GM18951 (cell line): ENCODE measurements at regions of chr1 and their contacts with region 1.

Region 1: DNA sequence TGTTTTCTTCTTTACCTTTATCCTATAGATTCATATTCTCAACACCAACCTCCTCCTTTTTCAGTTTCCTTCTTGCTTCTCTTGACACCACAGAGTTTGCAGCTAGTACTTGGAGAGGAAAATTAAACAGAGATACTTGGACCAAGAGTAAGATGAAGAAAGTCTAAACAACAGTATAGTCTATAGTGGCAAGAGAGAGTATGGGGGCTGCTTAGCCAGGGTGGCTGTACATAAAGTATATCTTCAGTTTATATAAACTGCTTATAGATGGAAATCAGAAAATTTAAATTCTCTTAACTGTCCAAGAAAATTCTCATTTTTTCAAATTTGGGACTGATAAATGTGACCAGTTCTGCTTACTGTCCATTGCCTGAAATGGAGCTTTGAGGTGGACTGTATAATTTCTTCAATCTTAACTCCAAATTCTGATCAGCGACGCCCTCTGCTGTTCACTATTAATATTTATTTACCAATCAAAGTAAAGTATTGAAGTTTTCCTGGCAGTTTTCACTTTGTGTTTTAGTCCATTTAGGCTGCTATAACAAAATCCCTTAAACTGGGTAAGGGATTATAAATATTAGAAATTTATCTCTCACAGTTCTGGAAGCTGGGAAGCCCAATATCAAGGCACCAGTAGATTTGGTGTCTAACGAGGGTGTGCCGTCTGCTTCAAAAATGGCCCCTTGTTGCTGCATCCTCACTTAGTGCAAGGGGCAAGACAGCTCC is 14.8 kb upstream of the METTL18 start:
- POLR2A ChIP-seq: no peak

Region 2: GRCh38 chr1:169390303-169390702 is 419.2 kb before region 1 on chr1:
- in situ Hi-C with region 1: no loop called
- POLR2A ChIP-seq: no peak

Region 3: GRCh38 chr1:169595764-169596711 is 213.5 kb before region 1 on chr1:
- in situ Hi-C with region 1: loop called (anchors 10 kb)
- POLR2A ChIP-seq: no peak

Region 4: DNA sequence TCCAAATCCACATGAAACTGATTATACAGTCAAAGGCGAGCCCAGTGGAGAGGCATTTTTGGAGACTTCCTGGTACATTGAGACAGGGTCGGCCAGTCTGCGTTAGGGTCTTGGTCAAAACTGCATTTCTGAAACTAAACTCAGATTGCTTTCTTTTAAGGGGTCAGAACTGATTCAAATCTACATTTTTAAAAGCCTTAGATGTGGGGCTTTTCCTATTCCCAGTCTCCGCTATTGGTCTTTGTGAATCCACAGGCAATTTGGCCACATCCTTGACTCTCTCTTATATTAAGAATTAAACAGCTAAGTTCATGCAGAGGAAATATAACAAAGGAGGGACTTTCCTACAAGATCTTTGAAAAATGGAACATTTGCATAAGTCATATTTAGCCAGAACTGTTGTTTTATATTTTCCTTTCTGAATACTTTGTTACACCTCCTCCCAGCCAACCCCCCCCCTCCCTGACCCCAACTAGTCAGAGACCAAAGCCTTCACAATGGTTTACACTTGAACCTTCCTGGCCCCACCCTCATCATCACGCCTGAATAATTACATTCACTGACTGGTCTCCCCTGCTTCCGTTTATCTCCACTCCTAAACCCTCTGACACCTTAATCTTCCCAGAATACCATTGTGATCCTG is 129.0 kb before region 1 on chr1:
- in situ Hi-C with region 1: no loop called
- POLR2A ChIP-seq: no peak

Region 5: DNA sequence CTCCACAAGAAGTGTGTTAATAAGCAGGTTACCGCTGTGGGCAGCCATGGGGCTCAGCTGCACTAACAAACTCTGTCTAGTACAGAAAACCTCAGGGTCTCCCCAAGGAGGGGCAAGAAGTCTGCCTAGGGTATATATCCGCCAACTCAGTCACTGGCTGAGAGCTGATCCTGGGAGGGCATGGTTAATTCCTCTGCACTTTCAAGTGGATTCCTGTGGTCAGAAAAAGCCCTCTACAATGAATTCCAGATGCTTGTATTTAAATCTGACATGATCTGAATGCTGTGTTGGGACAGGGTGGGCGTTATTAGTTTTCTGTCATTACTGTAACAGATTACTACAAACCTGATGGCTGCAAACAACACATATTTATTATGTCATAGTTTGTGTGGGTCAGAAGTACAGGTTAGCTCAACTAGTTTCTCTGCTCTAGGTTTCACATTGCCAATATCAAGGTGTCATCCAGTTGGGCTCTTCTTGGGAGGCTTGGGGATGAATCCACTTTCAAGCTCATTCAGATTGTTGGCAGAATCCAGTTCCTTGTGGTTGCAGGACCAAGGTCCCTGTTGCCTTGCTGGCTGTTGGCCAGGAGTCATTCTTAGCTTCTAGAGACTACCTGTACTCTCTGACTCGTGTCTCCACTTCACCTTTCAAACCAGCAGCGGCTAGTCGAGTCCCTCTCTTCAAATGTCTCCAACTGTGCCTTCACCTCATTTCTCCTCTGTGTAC is 67.7 kb before region 1 on chr1:
- in situ Hi-C with region 1: no loop called
- POLR2A ChIP-seq: no peak

Region 6: DNA sequence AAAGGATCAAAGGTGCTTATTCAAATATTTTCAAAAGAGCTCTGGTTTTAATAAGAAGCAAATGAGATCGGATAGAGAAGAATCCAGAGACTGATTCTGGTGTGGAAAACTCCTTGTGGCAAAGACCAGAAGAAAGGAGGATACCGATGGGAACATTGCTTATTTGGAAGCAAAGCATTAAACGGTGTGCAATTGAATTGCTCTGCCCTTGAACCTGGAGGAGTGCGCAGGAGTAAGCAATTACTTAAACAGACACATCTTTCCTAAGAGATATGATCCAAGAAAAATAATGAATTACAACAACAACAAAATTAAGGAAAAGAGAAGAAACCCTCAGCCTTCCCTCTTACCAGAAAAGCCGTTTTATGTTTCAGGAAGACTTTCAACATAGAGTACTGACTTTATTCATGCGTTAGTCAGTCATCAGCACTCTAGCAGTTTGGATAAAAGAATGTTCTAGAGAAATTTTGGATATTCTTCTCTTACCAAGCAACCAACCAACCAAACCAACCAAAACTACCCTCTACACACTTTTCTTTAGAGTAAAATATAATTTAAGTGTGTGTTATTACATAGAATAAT is 528.0 kb after region 1 on chr1:
- in situ Hi-C with region 1: no loop called
- POLR2A ChIP-seq: no peak